OCI-LY7 (cell line): ENCODE measurements at regions of chr3 and their contacts with region 1.

Region 1: GRCh38 chr3:122661633-122662032 is 19.0 kb upstream of the PARP14 start:
- DNase-seq: no peak
- H3K4me3 ChIP-seq: no peak overlapping the region
- H3K27ac ChIP-seq: no peak overlapping the region
- H3K4me1 ChIP-seq: peaks cover 6% of the 10 kb centered on the region
- CTCF ChIP-seq: no peak

Region 2: DNA sequence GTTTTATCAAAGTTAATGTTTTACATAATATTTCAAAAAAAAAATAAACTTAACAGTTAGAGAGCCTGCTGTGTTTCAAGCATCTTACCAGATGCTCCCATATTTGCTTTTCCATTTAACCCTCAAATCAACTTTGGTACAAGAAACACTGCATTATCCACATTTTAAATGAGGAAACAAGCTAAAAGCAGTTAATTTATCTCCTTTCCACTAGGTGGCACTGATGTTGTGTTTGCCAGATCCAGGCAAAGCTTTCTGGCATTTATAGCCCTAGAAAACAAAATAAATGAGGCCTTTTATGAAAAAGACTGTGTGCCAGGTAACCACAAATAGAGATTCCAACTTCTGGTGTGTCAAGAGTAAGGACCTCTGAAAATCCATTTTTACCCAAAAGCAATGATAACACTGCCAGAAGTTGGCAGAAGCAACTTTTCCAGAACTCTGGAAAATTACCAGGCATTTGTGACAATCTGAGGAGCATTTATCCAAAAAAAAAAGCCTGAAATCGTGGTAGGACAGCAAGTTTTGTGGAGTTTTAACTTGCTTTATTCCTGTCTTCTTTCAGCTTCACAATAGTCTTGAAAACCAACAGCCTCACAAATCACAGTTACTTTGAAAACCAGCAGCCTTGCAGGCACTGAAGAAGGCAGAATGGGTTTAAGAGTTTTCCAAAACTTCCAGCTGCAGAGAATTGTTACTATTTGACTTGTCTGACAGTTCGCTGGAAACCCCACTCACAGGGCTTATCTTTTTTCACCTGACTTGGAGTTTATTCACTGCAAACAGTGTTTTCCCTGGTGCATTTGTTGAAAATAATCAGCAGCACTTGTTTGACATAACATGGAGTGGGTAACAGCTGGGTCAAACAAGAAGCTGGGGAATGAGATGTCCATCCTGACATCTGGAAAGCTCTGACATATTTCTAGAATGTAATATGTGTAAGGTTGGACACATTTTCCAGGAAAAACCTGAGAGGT is 268.5 kb before region 1 on chr3:
- CTCF ChIA-PET with region 1: no interaction called
- POLR2A ChIA-PET with region 1: no interaction called
- intact Hi-C with region 1: loop called (anchors 5 kb)
- DNase-seq: peak; percentile 70
- H3K4me3 ChIP-seq: no peak overlapping the region
- H3K27ac ChIP-seq: no peak overlapping the region
- H3K4me1 ChIP-seq: peaks cover 5% of the 10 kb centered on the region
- CTCF ChIP-seq: peak; percentile 95

Region 3: DNA sequence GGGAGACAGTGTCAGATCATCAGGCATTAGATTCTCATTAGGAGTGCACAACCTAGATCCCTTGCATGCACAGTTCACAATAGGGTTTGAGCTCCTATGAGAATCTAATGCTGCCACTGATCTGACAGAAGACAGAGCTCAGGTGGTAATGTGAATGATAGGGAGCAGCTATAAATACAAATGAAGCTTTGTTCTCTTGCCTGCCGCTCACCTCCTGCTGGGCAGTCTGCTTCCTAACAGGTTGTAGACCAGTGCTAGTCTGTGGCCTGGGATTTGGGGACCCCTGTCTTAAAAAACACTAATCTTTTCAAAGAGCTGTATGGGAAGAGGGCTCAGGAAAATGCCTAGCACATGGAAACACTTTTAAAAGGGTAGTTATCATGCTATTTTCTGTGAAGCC is 31.9 kb before region 1 on chr3:
- CTCF ChIA-PET with region 1: no interaction called
- POLR2A ChIA-PET with region 1: no interaction called
- intact Hi-C with region 1: no loop called
- DNase-seq: no peak
- H3K4me3 ChIP-seq: no peak overlapping the region
- H3K27ac ChIP-seq: no peak overlapping the region
- H3K4me1 ChIP-seq: no peaks in the 10 kb centered on the region
- CTCF ChIP-seq: no peak